ENCODE measurements at regions of chr17 and their contacts with region 1.

Region 1: GRCh38 chr17:80147035-80147836 is at the start of gene EIF4A3:
- DNase-seq: peak; percentile 99
- ATAC-seq: peak; percentile 91
- H3K4me3 Mint-ChIP-seq: peak within 1 kb of the TSS; percentile 77
- H3K27ac Mint-ChIP-seq: peak within 1 kb of the TSS; percentile 93
- H3K4me1 Mint-ChIP-seq: peaks cover 43% of the 10 kb centered on the region
- H3K27me3 Mint-ChIP-seq: no peaks in the 10 kb centered on the region
- total RNA-seq, gene EIF4A3: 103 to 141 TPM

Region 2: DNA sequence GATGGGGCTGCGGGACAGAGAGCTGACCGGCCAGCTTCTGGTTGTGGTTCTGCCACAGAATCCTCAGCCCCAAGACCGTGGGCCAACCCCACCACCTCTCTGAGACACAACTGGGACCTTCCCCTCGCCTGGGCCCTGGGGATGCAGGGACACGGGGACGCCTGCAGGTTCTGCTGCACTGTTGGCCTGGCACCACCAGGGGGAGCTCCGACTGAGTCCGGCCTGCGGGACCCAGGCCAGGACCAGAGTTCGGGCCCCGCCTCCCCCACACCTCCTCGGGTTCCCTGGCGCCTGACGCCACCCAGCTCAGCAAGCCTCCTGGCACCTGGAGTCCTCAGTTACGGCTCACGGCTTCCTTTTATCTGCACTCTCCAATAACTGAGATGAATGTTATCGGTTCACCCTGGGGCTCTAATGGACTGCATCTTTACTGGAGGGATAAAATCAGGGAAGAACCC is 138.8 kb before region 1 on chr17:
- CTCF ChIA-PET with region 1: interaction called, 5 read pairs
- POLR2A ChIA-PET with region 1: no interaction called
- intact Hi-C with region 1: loop called in 1 of 2 experiments (anchors 5 kb)
- DNase-seq: peak; percentile 91
- ATAC-seq: peak; percentile 95
- H3K4me3 Mint-ChIP-seq: no peak overlapping the region
- H3K27ac Mint-ChIP-seq: no peak overlapping the region
- H3K4me1 Mint-ChIP-seq: peaks cover 9% of the 10 kb centered on the region
- H3K27me3 Mint-ChIP-seq: no peaks in the 10 kb centered on the region

Region 3: DNA sequence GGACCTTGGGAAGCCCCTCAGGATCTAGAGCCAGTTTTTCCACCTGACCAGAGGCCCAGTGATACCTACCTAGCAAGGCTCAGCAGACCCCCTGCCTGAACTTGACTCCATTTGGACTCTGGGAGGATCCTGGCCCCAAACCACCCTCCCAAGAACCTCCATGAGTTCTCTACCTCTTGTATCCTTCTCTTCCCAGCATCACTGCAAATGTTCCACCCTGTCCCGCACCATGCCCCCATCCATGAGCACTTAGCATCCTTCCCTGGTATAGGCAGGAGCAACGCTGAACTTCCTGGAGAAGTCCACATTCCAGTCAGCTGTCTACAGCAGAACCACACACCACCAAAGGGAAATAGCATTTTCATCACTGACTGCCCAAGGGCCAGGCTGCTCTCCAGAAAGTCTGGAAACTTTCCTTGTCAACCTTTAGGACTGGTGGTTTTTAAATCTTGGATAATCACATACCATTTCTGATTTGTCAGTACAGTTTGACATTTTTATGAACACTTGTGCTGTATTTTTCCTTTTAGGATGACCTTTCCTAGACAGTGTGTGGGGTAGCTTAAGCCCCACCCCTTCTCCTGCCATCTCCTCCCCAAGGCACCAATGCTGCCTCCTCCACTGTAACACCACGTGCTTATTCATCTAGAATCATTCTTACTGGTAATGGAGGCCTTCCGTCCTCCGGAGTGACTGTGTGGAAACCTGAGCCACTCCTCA is 14.2 kb before region 1 on chr17:
- CTCF ChIA-PET with region 1: interaction called, 3 read pairs
- POLR2A ChIA-PET with region 1: interaction called, 12 read pairs
- intact Hi-C with region 1: no loop called
- DNase-seq: no peak
- ATAC-seq: peak; percentile 9
- H3K4me3 Mint-ChIP-seq: no peak overlapping the region
- H3K27ac Mint-ChIP-seq: no peak overlapping the region
- H3K4me1 Mint-ChIP-seq: no peaks in the 10 kb centered on the region
- H3K27me3 Mint-ChIP-seq: peaks cover 4% of the 10 kb centered on the region

Region 4: GRCh38 chr17:80254396-80255251 is 107.4 kb after region 1 on chr17:
- CTCF ChIA-PET with region 1: no interaction called
- POLR2A ChIA-PET with region 1: no interaction called
- intact Hi-C with region 1: loop called in 1 of 2 experiments (anchors 1 kb)
- DNase-seq: peak; percentile 83
- ATAC-seq: peak; percentile 62
- H3K4me3 Mint-ChIP-seq: peak overlapping the region; percentile 64
- H3K27ac Mint-ChIP-seq: peak overlapping the region; percentile 97
- H3K4me1 Mint-ChIP-seq: peaks cover 71% of the 10 kb centered on the region
- H3K27me3 Mint-ChIP-seq: no peaks in the 10 kb centered on the region

Region 5: DNA sequence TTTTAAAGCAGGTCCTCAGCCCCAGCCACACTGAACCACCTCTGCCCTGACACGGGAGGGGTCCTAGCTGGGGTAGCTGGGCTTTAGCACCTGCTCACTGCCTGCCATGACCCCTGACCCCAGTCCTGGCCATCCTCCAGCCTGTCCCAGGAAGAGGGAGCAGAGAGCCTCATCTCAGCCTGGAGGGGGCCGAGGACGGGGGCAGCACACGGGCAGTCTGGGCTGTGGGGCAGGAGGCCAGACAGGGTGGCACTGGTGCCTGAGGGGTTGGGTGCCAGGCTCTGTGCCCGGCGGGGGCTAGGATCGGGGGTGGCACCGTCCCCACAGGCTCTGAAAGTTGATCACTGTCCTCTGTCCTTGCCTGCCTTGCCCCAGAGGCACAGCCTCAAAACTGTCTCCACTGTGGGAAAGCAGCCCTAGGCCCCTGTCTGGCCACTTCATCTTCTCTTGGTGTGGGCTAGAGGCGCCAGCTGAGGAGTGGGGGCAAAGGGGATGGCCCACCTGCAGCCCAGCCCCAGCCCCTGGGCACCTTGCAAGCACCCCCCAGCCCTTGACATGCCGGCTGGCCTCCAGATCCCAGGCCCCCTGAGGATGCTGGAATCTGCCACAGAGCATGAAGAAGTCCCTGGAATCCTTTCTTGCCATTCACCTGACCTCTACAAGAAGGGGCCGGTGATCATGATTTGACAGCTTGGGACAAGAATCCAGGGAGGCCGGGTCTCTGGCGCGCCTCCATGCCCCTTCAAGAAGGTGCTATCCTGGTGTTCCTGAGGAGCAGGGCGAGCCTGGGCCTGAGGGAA is 283.4 kb after region 1 on chr17:
- CTCF ChIA-PET with region 1: no interaction called
- POLR2A ChIA-PET with region 1: no interaction called
- intact Hi-C with region 1: no loop called
- DNase-seq: no peak
- ATAC-seq: no peak
- H3K4me3 Mint-ChIP-seq: no peak overlapping the region
- H3K27ac Mint-ChIP-seq: no peak overlapping the region
- H3K4me1 Mint-ChIP-seq: peaks cover 9% of the 10 kb centered on the region
- H3K27me3 Mint-ChIP-seq: no peaks in the 10 kb centered on the region

Region 6: DNA sequence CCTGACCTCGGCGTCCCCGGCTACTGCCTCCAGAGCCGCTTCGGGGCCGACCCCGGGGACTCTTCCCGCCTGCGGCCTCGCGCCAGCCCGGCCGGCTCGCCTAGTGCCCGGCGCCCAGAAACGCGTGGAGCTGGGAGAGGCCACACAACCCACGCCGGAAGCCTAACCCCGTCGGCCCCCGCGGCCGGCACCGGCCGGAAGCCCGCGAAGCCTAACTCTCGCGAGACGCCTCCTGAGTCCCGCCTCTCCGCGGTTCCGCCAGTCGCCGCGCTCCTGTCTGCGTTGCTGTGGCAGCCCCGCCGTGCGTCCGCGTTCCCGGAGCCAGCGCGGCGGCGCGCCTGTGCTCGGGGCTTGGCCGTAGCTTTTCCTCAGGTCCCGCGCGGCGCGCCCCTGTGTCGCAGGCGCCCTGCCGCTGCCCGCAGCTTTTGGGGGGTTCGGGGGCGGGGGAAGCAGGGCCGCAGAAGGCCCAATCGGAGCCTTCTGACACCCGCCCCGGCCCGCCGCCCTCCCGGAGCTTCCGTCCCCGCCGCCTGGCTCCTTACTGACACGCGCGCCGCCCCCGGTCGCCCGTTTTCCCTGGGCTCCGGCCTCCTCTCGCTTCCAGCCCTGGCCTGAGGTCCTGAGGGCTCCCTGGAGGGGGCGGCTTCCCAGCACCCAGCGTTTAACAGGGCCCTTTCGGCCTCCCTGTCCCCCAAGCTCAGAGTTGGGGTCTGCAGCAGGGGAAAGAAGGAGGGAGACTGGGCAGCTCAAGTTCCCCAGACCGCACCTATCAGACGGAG is 307.5 kb after region 1 on chr17:
- CTCF ChIA-PET with region 1: interaction called, 3 read pairs
- POLR2A ChIA-PET with region 1: no interaction called
- intact Hi-C with region 1: loop called in 1 of 2 experiments (anchors 1 kb)
- DNase-seq: peak; percentile 98
- ATAC-seq: peak; percentile 93
- H3K4me3 Mint-ChIP-seq: peak overlapping the region; percentile 99
- H3K27ac Mint-ChIP-seq: peak overlapping the region; percentile 94
- H3K4me1 Mint-ChIP-seq: peaks cover 23% of the 10 kb centered on the region
- H3K27me3 Mint-ChIP-seq: peaks cover 13% of the 10 kb centered on the region

Measured in activated CD4-positive, alpha-beta T cell treated with anti-CD3 and anti-CD28 coated beads for 36 hours (primary cell).